ENCODE measurements at regions of chr1 and their contacts with region 1.

Region 1: GRCh38 chr1:43868741-43869067 is 64.9 kb upstream of the ARTN start:
- DNase-seq: no peak
- H3K4me3 Mint-ChIP-seq: no peak overlapping the region
- H3K27ac Mint-ChIP-seq: peak overlapping the region; percentile 10
- H3K4me1 Mint-ChIP-seq: peaks cover 30% of the 10 kb centered on the region
- H3K27me3 Mint-ChIP-seq: no peaks in the 10 kb centered on the region

Region 2: DNA sequence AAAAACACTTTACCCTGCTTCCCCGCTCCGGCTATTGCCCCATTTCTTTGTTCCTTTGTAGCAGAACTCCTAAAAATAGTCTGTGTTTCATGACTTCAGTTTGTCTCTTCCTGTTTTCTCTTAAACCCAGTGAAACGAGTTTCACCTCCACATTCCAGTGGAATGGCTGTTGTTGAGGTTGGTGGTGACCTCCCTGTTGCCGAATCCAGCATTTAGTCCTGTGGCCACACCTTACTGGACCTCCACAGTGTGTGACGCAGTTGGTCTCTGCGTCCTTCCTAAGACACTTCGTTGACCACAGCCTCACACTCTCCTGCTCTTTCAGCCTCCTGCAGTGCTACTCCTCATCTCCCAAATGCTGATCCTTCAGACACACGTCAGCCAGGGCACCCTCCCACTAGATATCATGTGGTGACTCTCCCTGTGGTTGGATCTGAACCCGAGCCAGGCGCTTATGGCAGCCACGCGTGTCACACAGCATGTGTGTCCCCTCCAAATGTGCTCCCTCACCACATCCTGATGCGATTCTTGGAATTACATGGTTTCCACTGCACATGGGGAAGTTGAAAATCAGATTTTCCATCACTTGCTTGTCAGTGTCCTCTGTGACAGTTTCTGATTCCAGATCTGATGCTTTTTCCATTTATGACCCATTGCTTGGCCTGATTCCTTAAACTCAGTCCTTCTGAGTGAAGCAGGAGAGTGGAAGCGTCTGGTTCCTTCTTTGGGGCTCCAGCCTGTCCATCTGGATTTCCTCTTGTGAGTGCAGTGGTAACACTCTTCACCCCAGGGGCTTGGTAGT is 34.2 kb before region 1 on chr1:
- intact Hi-C with region 1: loop called (anchors 5 kb)
- DNase-seq: no peak
- H3K4me3 Mint-ChIP-seq: no peak overlapping the region
- H3K27ac Mint-ChIP-seq: peak overlapping the region; percentile 48
- H3K4me1 Mint-ChIP-seq: peaks cover 49% of the 10 kb centered on the region
- H3K27me3 Mint-ChIP-seq: no peaks in the 10 kb centered on the region

Region 3: GRCh38 chr1:43924516-43924915 is 55.8 kb after region 1 on chr1:
- intact Hi-C with region 1: no loop called
- DNase-seq: no peak
- H3K4me3 Mint-ChIP-seq: no peak overlapping the region
- H3K27ac Mint-ChIP-seq: no peak overlapping the region
- H3K4me1 Mint-ChIP-seq: peaks cover under 1% of the 10 kb centered on the region
- H3K27me3 Mint-ChIP-seq: no peaks in the 10 kb centered on the region